Activated CD8-positive, alpha-beta memory T cell treated with anti-CD3 and anti-CD28 coated beads, Interleukin-2, amount 10 ng/mL, durations not matched to agents 7 days and 5 days (primary cell): ENCODE measurements at regions of chr6 and their contacts with region 1.

Region 1: GRCh38 chr6:13336553-13336952 is 8.2 kb upstream of the TBC1D7 start:
- DNase-seq: peak; percentile 84
- ATAC-seq: peak; percentile 77
- H3K4me3 Mint-ChIP-seq: no peak overlapping the region
- H3K27ac Mint-ChIP-seq: no peak overlapping the region
- H3K4me1 Mint-ChIP-seq: peaks cover 11% of the 10 kb centered on the region
- H3K27me3 Mint-ChIP-seq: peaks cover 7% of the 10 kb centered on the region

Region 2: DNA sequence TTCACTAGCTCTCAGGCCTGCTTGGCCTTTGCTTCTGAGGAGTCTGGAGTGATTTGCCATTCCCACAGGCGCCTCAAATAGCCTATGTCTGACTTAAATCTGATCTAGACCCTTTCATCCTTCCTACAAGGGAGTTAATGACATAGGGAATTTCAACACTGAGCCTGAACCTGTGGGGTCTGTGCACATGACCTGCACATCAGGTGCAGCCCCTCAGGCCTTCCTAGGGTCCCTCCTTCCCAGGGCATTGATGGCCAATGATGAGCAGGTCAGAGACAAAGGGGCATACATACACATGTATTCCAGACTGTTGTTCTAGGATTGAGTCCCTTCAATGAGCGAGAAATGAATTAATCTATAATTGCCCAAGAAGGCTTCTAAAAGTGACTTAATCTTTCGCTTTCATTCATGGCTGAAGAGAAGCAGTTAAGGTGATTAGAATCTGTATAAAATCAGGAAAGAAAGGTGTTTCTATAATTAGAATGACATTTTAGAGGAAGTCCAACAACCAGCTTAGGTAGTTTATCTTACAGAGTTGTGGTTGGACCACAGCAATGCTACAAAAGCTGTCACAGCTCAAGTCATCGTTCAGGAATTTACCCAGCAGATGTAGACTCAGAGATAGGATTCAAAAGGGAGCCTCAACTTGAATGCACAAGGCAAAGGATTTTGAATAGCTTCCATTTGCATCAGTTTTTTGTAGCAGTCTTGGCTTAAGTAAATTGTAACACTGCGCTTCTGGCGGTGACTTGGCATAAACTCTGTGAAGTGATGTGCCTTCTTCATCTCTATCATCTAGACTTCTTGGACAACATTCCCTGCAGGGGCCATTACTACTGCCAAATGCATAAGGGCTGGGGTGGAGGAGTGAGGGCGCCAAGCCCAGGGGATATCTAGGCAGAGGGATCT is 18.7 kb after region 1 on chr6:
- CTCF ChIA-PET with region 1: interaction called, 12 read pairs
- DNase-seq: peak; percentile 54
- ATAC-seq: peak; percentile 67
- H3K4me3 Mint-ChIP-seq: peak overlapping the region; percentile 65
- H3K27ac Mint-ChIP-seq: peak overlapping the region; percentile 96
- H3K4me1 Mint-ChIP-seq: peaks cover 44% of the 10 kb centered on the region
- H3K27me3 Mint-ChIP-seq: no peaks in the 10 kb centered on the region

Region 3: GRCh38 chr6:13417954-13418353 is 81.4 kb after region 1 on chr6:
- CTCF ChIA-PET with region 1: no interaction called
- DNase-seq: no peak
- ATAC-seq: no peak
- H3K4me3 Mint-ChIP-seq: no peak overlapping the region
- H3K27ac Mint-ChIP-seq: no peak overlapping the region
- H3K4me1 Mint-ChIP-seq: peaks cover 3% of the 10 kb centered on the region
- H3K27me3 Mint-ChIP-seq: no peaks in the 10 kb centered on the region

Region 4: DNA sequence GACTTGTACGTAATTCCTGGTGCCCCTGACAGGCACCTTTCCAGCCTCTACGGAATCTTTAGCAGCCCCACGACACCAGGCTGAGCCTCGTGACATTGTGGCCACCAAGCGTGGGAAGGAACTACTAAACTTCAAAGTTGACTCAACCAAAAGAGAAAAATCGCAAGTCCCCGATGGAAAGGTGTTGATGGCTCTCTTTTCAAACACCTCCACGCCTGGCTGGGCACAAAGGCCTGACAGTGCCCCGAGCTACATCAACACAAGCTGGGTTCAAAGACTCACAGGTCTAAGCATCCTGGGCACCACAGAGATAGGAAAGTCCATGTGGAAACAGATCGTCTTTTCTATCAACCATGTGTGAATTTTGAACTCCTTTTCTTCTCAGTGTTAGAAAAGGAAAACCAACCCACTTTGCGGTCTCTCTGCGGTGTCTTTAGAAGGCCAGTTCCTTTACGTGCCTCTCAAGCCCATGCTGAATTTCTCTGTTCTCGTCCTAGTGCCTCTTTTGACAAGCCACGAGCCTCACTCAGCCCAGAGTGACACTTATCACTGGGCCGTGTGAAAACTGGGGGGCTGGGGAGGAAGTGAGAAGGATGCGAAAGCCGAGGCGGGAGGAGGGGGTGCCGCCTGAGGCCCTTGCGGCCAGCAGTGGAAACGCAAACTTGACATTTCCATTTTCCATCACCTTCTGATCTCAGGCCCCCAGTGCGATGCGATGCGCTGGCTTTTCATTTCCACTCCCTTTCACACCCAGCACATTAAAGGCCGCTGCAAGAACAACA is 91.4 kb after region 1 on chr6:
- CTCF ChIA-PET with region 1: interaction called, 10 read pairs
- DNase-seq: peak; percentile 89
- ATAC-seq: peak; percentile 72
- H3K4me3 Mint-ChIP-seq: peak overlapping the region; percentile 61
- H3K27ac Mint-ChIP-seq: peak overlapping the region; percentile 92
- H3K4me1 Mint-ChIP-seq: peaks cover 72% of the 10 kb centered on the region
- H3K27me3 Mint-ChIP-seq: no peaks in the 10 kb centered on the region

Region 5: DNA sequence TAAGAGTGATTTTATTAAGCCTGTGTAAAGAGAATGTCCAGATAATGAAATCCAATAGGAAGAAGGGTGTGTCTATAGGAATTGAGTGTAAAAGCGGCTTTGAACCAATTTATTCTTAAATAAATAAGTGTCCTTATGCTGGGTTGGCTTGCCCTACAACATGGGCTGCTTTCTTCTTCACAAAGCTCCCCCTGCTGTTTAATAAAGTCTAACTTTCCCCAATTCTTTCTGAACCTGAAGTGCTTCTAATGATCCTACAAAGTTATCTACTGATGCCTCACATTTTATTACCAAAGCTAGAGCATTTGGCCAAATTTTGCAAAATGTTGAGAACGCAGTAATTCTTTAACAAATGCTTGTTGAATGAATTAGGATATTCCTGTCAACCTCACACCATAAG is 201.5 kb after region 1 on chr6:
- CTCF ChIA-PET with region 1: interaction called, 13 read pairs
- DNase-seq: no peak
- ATAC-seq: no peak
- H3K4me3 Mint-ChIP-seq: no peak overlapping the region
- H3K27ac Mint-ChIP-seq: no peak overlapping the region
- H3K4me1 Mint-ChIP-seq: no peaks in the 10 kb centered on the region
- H3K27me3 Mint-ChIP-seq: peaks cover 3% of the 10 kb centered on the region